Ovary (tissue), 10 donors: ENCODE measurements at regions of chr3 and their contacts with region 1.

Region 1: DNA sequence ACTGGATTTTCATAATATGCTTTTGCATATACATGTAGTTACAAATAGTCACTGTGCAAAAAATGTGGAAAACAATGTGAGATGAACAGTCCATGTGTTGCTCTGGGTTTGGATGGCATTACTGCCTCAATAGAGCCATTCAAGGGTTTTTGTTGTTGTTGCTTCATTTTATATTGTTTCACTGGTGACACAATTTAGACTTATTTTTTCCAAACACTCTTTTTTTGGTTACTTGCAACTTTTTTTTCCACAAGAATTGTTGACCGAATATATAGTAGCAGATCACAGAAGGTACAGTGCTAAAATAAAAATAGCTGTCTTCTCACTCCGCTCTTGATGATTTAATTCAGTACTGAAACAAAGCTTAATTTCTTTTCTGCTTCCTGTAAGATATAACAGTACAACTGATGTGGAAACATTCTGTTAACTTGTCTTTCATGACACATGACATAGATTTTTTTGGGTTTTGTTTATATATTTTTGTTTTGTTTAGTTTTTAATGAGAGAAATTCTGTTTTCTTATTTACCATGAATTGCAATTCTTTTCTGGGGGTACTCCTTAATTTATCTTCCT is 618.6 kb downstream of the NAALADL2 start:
- DNase-seq: no peak
- H3K4me3 ChIP-seq: no peak overlapping the region
- H3K27ac ChIP-seq: no peak overlapping the region
- H3K4me1 ChIP-seq: no peaks in the 10 kb centered on the region
- H3K27me3 ChIP-seq: no peaks in the 10 kb centered on the region
- CTCF ChIP-seq: no peak
- EP300 ChIP-seq: no peak
- POLR2A ChIP-seq: no peak

Region 2: DNA sequence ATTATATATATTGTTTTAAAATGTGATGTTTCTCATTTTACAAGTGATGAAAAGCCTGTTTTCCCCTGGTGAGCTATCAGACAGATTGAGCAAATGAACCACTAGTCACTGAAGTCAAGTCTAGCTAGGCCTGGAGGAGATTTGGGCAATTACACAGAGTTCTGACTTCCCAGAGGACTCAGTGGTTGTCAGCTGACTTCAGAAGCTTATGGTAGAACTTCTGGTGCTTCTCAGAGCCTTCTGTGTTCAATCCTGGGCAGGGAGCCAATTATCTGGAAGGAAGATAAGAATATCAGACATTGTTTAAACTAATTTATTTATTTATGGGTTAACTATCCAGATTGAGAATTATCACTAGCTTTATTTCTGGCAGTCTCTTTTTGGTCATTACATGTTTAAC is 656.3 kb before region 1 on chr3:
- intact Hi-C with region 1: no loop called
- DNase-seq: no peak
- H3K4me3 ChIP-seq: no peak overlapping the region
- H3K27ac ChIP-seq: no peak overlapping the region
- H3K4me1 ChIP-seq: peaks cover 1% of the 10 kb centered on the region
- H3K27me3 ChIP-seq: no peaks in the 10 kb centered on the region
- CTCF ChIP-seq: no peak
- EP300 ChIP-seq: no peak
- POLR2A ChIP-seq: no peak

Region 3: DNA sequence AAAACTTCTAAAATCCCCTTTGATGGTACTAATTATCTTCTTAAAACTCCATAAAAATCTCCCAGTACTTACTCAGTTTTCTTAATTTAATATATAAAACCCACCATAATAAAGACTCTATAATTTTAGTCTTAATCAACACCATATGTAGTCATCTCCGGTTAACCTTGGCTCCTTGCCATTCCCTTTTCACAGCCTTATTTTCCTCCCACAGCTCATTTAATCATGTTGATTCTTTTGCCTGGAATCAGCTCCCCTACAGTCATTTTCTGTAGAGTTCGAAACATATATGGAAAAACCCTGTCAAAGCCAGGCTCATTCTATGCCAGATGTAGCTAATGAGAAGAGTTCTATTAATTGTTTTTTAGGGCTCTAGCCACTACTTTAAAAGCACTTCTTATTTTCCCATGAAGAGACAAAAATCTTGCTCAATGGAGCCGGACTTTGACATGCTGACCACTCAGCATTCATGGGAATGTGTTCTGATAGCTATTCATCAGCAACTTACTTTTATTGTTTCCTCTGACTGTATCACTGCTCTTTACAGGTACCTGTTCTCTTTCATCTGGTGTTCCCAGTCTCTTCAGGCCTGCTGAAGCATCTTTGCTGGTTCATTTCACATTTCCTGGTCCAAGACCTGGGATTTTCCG is 45.2 kb before region 1 on chr3:
- intact Hi-C with region 1: no loop called
- DNase-seq: no peak
- H3K4me3 ChIP-seq: no peak overlapping the region
- H3K27ac ChIP-seq: no peak overlapping the region
- H3K4me1 ChIP-seq: peaks cover 2% of the 10 kb centered on the region
- H3K27me3 ChIP-seq: no peaks in the 10 kb centered on the region
- CTCF ChIP-seq: no peak
- EP300 ChIP-seq: no peak
- POLR2A ChIP-seq: no peak

Region 4: GRCh38 chr3:176964661-176965060 is 1486.9 kb after region 1 on chr3:
- intact Hi-C with region 1: loop called in 1 of 4 experiments (anchors 5 kb)
- DNase-seq: no peak
- H3K4me3 ChIP-seq: no peak overlapping the region
- H3K27ac ChIP-seq: no peak overlapping the region
- H3K4me1 ChIP-seq: peaks cover 5% of the 10 kb centered on the region
- H3K27me3 ChIP-seq: no peaks in the 10 kb centered on the region
- CTCF ChIP-seq: no peak
- EP300 ChIP-seq: no peak
- POLR2A ChIP-seq: no peak